ENCODE measurements at regions of chr18 and their contacts with region 1.

Region 1: DNA sequence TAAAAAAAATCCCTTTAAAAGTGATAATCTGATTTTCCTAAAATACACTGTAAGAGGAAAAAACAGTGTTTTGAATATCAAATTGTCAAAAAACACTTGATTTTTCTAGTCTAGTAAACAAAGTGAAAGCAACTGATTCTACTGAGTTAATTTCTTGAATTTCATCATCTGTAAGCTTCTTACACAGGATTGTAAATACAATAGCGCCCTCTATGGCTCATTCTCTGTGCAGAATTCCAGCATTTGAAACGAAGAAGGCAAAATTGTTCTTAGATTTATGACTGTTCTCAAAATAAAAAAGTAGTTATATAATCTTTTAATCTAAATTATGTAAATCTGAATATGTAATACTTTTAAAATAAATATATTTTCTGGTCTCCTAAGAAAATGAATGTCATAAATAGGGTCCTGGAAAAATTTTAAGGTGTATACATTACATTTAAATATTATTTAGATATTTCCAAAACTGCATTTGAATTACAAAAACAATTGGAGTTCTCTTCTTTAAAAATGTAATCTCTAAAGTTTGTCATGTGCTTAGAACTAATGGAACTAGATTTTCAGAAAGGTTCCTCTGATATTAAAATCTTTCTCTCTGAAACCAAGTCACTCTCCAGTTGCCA is 176.9 kb upstream of the MC4R start:
- DNase-seq: no peak
- H3K4me3 ChIP-seq: no peak overlapping the region
- H3K27ac ChIP-seq: no peak overlapping the region
- H3K4me1 ChIP-seq: no peaks in the 10 kb centered on the region
- H3K27me3 ChIP-seq: no peaks in the 10 kb centered on the region
- CTCF ChIP-seq: peak in 2 of 3 experiments; percentile 46 to 71
- POLR2A ChIP-seq: no peak

Region 2: GRCh38 chr18:59996370-59996966 is 553.0 kb before region 1 on chr18:
- intact Hi-C with region 1: loop called (anchors 10 kb)
- DNase-seq: no peak
- H3K4me3 ChIP-seq: no peak overlapping the region
- H3K27ac ChIP-seq: no peak overlapping the region
- H3K4me1 ChIP-seq: no peaks in the 10 kb centered on the region
- H3K27me3 ChIP-seq: no peaks in the 10 kb centered on the region
- CTCF ChIP-seq: peak in 1 of 3 experiments; percentile 18
- POLR2A ChIP-seq: no peak

Measured in vagina (tissue), 2 donors.